ENCODE measurements at regions of chr5 and their contacts with region 1.

Region 1: DNA sequence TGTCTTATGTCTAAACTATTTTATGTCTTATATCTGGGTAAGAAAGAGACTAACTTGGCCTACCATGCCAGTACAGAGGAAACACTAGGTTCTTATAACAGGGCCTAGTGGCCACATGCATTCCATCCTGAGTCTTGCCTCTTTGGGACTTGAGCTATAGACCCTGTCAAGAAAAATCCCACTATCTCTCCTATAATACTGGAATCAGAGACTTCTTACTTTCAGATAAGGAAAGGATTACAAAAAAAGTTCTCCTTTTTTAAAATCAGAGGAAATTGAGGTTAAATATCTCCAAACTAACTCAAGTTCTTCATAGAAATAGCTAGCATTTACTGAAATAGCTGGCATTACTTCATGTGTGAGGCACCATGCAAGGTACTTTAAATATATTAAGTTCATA is 34.3 kb downstream of the PTGER4 start:
- DNase-seq: no peak
- ATAC-seq: no peak
- H3K4me3 Mint-ChIP-seq: no peak overlapping the region
- H3K27ac Mint-ChIP-seq: no peak overlapping the region
- H3K4me1 Mint-ChIP-seq: no peaks in the 10 kb centered on the region
- H3K27me3 Mint-ChIP-seq: no peaks in the 10 kb centered on the region

Region 2: GRCh38 chr5:40634154-40634553 is 79.8 kb before region 1 on chr5:
- CTCF ChIA-PET with region 1: no interaction called
- POLR2A ChIA-PET with region 1: no interaction called
- DNase-seq: no peak
- ATAC-seq: no peak
- H3K4me3 Mint-ChIP-seq: no peak overlapping the region
- H3K27ac Mint-ChIP-seq: no peak overlapping the region
- H3K4me1 Mint-ChIP-seq: peaks cover 7% of the 10 kb centered on the region
- H3K27me3 Mint-ChIP-seq: no peaks in the 10 kb centered on the region

Region 3: GRCh38 chr5:40736103-40736875 is 22.3 kb after region 1 on chr5:
- CTCF ChIA-PET with region 1: interaction called, 12 read pairs
- POLR2A ChIA-PET with region 1: no interaction called
- DNase-seq: no peak
- ATAC-seq: peak; percentile 72
- H3K4me3 Mint-ChIP-seq: no peak overlapping the region
- H3K27ac Mint-ChIP-seq: no peak overlapping the region
- H3K4me1 Mint-ChIP-seq: peaks cover 26% of the 10 kb centered on the region
- H3K27me3 Mint-ChIP-seq: no peaks in the 10 kb centered on the region